ENCODE measurements at regions of chr17 and their contacts with region 1.

Region 1: GRCh38 chr17:2090804-2091534 is 36.1 kb downstream of the HIC1 start:
- DNase-seq: no peak
- H3K4me3 Mint-ChIP-seq: no peak overlapping the region
- H3K27ac Mint-ChIP-seq: peak overlapping the region; percentile 23
- H3K4me1 Mint-ChIP-seq: peaks cover 64% of the 10 kb centered on the region
- H3K27me3 Mint-ChIP-seq: no peaks in the 10 kb centered on the region

Region 2: GRCh38 chr17:2064980-2065785 is 25.8 kb before region 1 on chr17:
- CTCF ChIA-PET with region 1: interaction called, 68 read pairs
- POLR2A ChIA-PET with region 1: interaction called, 214 read pairs
- DNase-seq: peak; percentile 80
- H3K4me3 Mint-ChIP-seq: no peak overlapping the region
- H3K27ac Mint-ChIP-seq: peak overlapping the region; percentile 74
- H3K4me1 Mint-ChIP-seq: peaks cover 85% of the 10 kb centered on the region
- H3K27me3 Mint-ChIP-seq: no peaks in the 10 kb centered on the region

Region 3: DNA sequence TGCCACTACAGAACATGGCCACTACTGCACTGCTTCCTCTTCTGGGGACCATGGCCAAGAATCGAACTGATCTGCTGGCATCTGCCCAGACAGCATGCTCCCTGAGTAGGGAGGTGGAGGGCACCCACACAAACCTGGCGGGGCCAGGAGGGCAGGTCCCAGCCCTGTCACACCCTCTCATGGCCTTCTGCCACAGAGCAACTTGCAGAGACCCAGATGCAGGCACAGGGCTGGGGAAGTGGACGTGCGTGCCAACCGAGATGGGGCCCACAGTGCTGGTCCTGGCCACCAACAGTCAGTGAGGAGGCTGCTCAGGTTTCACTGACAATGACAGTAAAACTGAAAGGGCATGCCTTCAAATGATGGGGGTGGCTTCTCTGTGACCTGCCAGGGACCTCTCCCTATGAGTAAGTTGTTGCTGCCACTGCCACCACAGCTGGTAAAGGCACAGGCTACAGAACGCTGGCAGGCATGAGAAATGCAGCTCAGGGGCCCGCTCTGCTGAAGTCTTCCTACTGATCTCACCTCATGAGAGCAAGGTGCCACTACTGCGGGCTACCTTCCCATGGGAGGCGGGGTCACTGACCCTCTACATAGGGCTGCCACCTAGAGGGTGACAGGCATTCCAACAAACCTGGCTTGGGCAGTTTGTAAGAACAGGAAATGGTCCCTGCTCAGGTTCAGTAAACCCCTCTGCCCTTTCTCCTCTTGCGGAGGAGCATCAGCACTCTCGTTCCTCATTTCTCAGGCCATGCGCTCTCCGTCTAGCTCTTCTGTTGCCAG is 20.5 kb before region 1 on chr17:
- CTCF ChIA-PET with region 1: interaction called, 40 read pairs
- POLR2A ChIA-PET with region 1: interaction called, 214 read pairs
- DNase-seq: peak; percentile 88
- H3K4me3 Mint-ChIP-seq: peak overlapping the region; percentile 33
- H3K27ac Mint-ChIP-seq: peak overlapping the region; percentile 90
- H3K4me1 Mint-ChIP-seq: peaks cover 81% of the 10 kb centered on the region
- H3K27me3 Mint-ChIP-seq: no peaks in the 10 kb centered on the region

Region 4: DNA sequence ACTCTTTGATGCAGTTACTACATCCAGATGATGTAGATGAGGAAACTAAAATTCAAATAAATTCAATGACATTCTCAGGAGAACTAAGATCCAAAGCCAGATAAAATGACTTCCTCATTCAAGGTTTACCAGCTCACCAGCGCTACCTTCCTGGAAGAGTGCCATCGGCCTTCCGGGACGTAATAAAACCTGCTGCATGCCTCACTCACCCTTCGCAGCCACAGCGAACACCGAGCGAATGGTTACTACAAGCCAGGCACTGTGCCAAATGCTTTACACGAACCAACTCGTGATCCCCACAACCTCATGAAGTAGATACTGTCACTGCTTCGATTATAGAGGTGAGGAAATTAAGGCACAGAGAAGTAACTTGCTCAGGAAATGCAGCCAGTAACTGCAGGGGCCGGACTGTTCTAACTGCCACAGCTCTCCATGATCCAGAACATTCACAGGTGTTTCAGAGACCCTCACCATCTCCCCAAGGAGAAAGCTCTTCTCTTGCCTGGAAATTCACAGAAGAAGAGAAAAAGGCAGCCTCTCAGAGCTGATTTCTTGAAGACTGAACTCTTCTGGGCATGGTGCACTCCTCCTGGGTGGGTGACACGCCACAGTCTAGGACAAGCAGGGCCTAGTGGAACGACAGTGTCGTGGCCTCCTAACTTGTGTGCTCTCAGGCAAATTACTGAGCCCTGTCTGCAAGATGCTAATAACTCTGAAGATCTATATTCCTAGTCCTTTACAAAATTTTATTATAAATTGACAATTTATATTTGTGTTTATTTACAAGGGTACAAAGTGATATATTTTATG is 10.7 kb after region 1 on chr17:
- CTCF ChIA-PET with region 1: interaction called, 4 read pairs
- POLR2A ChIA-PET with region 1: interaction called, 21 read pairs
- DNase-seq: peak; percentile 49
- H3K4me3 Mint-ChIP-seq: no peak overlapping the region
- H3K27ac Mint-ChIP-seq: peak overlapping the region; percentile 12
- H3K4me1 Mint-ChIP-seq: peaks cover 42% of the 10 kb centered on the region
- H3K27me3 Mint-ChIP-seq: no peaks in the 10 kb centered on the region

Region 5: GRCh38 chr17:2122641-2123302 is 31.8 kb after region 1 on chr17:
- CTCF ChIA-PET with region 1: interaction called, 4 read pairs
- POLR2A ChIA-PET with region 1: interaction called, 15 read pairs
- DNase-seq: no peak
- H3K4me3 Mint-ChIP-seq: no peak overlapping the region
- H3K27ac Mint-ChIP-seq: no peak overlapping the region
- H3K4me1 Mint-ChIP-seq: peaks cover 22% of the 10 kb centered on the region
- H3K27me3 Mint-ChIP-seq: no peaks in the 10 kb centered on the region

Region 6: DNA sequence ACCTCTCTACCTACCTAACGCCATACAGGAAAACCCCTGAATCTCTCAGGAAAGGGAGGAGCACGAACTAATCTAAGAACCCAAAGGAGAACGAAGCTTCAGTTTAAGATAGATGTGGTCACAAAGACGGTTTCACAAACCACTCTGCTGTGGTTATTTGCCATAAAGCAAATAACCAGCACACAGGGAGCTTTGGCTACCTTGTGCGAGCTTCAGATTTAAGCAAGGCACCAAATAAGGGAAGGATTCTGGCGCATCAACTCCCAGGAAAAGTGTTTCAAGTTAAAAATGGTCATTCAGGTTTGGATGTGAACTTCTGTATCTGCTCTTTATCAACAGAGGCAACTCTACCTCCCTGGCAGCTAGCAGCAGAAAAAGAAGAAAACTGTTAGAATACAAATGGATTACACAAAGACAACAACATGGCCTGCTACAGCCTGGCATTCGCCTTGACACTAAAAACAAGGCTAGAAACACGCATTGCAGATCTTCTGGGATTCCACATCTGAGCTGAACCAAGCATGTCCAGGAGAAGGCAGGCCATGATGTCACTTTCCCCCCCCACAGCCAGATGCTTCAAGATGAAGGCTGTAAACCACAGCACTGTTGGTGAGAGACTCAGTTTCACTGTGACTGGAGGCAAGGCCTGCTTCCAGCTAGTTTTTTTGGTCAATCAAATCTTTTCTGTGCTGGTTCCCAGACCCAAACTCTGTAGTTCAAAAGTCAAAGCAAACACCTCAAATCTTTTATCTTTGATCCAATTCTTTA is 169.0 kb after region 1 on chr17:
- CTCF ChIA-PET with region 1: no interaction called
- POLR2A ChIA-PET with region 1: interaction called, 19 read pairs
- DNase-seq: peak; percentile 85
- H3K4me3 Mint-ChIP-seq: peak overlapping the region; percentile 67
- H3K27ac Mint-ChIP-seq: peak overlapping the region; percentile 94
- H3K4me1 Mint-ChIP-seq: peaks cover 80% of the 10 kb centered on the region
- H3K27me3 Mint-ChIP-seq: no peaks in the 10 kb centered on the region

Region 7: GRCh38 chr17:2266045-2266864 is 175.3 kb after region 1 on chr17:
- CTCF ChIA-PET with region 1: no interaction called
- POLR2A ChIA-PET with region 1: interaction called, 19 read pairs
- DNase-seq: peak; percentile 94
- H3K4me3 Mint-ChIP-seq: peak overlapping the region; percentile 79
- H3K27ac Mint-ChIP-seq: peak overlapping the region; percentile 100
- H3K4me1 Mint-ChIP-seq: peaks cover 80% of the 10 kb centered on the region
- H3K27me3 Mint-ChIP-seq: no peaks in the 10 kb centered on the region